Activated CD4-positive, alpha-beta memory T cell treated with anti-CD3 and anti-CD28 coated beads for 36 hours (primary cell): ENCODE measurements at regions of chr11 and their contacts with region 1.

Region 1: GRCh38 chr11:66842896-66843775 is at the start of gene RCE1:
- DNase-seq: peak; percentile 94
- H3K4me3 Mint-ChIP-seq: peak within 1 kb of the TSS; percentile 97
- H3K27ac Mint-ChIP-seq: peak within 1 kb of the TSS; percentile 93
- H3K4me1 Mint-ChIP-seq: peaks cover 49% of the 10 kb centered on the region
- H3K27me3 Mint-ChIP-seq: no peaks in the 10 kb centered on the region
- total RNA-seq, gene RCE1: 22.5 to 24.4 TPM

Region 2: DNA sequence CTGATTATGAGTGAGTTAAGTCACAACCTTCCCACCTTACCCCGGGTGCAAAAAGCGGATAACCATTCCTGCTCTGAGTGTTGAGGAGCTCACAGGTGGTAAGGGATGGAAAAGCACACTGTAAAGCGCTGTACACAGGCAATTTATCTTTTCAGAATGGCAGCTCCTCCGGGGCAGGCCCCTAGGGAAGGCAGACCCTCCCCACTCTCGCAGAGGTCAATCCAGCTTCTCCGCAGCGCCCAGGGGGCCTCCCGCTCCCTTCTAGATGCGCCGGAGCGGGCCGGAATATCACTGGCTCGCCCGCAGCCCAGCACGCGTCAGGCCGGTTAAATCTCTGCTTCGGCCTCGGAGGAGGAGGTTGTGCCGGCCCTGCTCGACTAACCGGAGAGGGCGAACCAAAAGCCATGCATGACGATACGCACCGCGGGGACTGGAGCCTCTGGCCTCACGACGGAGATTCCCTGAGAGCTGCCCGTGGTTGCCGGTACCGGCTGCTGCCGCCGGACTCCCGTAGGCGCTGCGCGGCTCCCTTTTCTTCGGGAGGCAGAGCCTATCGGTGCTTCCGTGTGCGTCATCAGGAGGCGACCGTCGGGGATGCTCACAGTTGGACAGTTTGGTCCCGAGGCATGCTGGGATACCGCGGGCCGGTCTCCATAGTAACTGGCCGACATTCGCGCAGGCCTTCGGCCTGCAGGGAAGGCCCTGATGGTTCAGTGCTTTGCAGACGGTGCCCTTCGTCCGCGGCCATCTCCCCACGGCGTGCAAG is 498.4 kb before region 1 on chr11 and contains the start of gene BRMS1:
- CTCF ChIA-PET with region 1: no interaction called
- POLR2A ChIA-PET with region 1: no interaction called
- intact Hi-C with region 1: loop called (anchors 1 kb)
- DNase-seq: peak; percentile 98
- H3K4me3 Mint-ChIP-seq: peak within 1 kb of the TSS; percentile 94
- H3K27ac Mint-ChIP-seq: peak within 1 kb of the TSS; percentile 85
- H3K4me1 Mint-ChIP-seq: peaks cover 50% of the 10 kb centered on the region
- H3K27me3 Mint-ChIP-seq: peaks cover 3% of the 10 kb centered on the region
- total RNA-seq, gene BRMS1: 29.3 to 31.2 TPM

Region 3: DNA sequence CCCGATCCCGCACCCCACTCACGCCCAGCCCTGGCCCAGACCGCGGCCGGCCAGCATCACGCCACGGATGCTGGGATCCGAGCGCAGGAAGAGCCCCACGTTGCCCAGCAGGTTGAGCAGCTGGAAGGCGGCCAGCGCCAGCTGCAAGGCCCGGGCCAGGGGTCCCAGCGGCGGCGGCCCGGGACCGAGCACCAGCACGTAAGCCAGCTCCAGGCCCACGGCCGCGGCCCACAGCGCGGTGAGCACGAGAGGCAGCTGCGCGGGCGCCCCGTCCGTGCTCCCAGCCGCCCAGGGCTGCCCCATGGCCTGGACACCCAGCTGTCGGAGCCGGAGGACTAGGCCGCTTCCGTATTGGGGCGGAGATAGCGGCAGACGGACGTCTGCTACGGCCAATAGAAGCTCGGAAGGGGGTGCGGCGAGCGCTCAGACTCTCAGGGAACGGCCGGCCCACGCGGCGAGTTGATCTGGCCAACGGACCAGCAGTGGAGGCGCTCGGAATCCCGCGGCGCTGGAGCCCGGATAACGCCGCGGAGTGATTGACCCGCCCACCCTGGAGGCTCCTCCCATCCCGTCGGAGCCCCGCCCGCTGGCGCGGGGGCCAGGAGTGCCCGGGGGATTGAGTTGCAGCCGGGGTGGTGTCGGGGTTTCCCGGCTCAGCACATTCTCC is 297.3 kb before region 1 on chr11 and contains the start of gene ZDHHC24:
- CTCF ChIA-PET with region 1: no interaction called
- POLR2A ChIA-PET with region 1: no interaction called
- intact Hi-C with region 1: loop called (anchors 5 kb)
- DNase-seq: peak; percentile 96
- H3K4me3 Mint-ChIP-seq: peak within 1 kb of the TSS; percentile 80
- H3K27ac Mint-ChIP-seq: peak within 1 kb of the TSS; percentile 74
- H3K4me1 Mint-ChIP-seq: peaks cover 14% of the 10 kb centered on the region
- H3K27me3 Mint-ChIP-seq: no peaks in the 10 kb centered on the region
- total RNA-seq, gene ZDHHC24: 13.5 to 14.9 TPM

Region 4: DNA sequence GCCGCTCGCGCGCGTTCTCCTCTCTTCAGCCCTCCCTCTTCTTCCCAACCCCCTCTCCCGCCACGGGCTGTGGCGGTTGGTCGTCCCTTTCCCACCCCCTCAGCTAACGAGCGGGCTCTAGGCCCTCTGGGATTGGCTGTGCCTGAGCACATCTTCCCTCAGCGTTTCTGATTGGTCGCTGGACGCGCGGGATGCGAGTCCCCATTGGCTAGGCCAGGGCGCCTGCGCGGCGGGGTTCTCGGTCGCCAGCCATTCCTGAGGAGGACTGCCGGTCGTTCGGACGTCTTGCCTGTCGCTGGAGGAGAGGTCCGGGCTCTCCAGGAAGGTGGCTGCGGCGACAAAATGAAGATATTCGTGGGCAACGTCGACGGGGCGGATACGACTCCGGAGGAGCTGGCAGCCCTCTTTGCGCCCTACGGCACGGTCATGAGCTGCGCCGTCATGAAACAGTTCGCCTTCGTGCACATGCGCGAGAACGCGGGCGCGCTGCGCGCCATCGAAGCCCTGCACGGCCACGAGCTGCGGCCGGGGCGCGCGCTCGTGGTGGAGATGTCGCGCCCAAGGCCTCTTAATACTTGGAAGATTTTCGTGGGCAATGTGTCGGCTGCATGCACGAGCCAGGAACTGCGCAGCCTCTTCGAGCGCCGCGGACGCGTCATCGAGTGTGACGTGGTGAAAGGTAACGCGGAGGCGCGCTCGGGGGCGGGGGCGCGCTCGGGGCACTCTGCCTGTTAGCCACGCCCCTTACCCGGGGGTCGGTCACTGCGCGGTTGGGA is 226.6 kb before region 1 on chr11 and contains the start of gene RBM14:
- CTCF ChIA-PET with region 1: no interaction called
- POLR2A ChIA-PET with region 1: interaction called, 8 read pairs
- intact Hi-C with region 1: loop called (anchors 5 kb)
- DNase-seq: peak; percentile 99
- H3K4me3 Mint-ChIP-seq: peak within 1 kb of the TSS; percentile 91
- H3K27ac Mint-ChIP-seq: peak within 1 kb of the TSS; percentile 94
- H3K4me1 Mint-ChIP-seq: peaks cover 36% of the 10 kb centered on the region
- H3K27me3 Mint-ChIP-seq: no peaks in the 10 kb centered on the region
- total RNA-seq, gene RBM14: 114 to 121 TPM

Region 5: DNA sequence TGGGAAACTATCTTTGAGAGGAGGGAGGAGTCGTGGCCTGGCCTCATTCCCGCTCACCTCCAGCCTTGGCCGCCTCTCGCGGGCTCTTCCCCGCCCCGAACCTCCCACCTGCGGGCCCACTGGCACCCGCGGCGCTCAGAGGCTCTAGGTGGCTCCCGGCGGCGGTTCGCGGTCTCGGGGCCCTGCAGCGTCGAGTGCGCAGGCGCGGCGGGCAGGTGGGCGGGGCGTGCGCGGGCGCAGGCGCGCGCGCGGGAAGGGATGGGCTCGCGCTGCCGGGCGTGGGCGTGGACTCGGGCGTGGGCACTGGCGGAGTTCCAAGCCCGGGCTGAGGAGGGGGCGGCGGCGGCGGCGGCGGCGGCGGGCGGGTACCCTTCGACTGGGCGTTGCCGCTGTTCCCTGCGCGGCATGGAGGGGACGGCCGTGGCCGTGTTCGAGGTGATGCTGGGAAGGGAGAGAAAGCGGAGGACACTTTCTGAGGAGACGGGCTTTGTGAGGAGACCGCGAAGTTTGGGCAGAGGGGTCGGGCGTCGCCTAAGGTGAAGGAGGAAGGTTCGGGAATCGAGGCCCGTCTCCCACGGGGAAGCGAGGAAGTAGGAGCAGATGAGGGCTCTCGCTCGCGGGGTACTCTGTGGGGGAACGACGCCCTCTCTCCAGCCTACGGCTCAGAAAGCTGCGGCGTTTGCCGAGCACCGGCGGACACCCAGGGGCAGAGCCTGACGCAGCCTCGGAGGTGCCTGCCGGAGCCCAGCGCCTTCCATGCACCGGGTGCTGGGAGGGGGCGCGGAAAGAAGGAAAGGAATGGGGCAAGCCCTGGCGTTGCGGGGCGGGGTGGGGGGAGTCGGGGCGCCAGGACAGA is 98.4 kb before region 1 on chr11:
- CTCF ChIA-PET with region 1: no interaction called
- POLR2A ChIA-PET with region 1: interaction called, 3 read pairs
- intact Hi-C with region 1: loop called (anchors 1 kb)
- DNase-seq: peak; percentile 92
- H3K4me3 Mint-ChIP-seq: peak overlapping the region; percentile 92
- H3K27ac Mint-ChIP-seq: peak overlapping the region; percentile 78
- H3K4me1 Mint-ChIP-seq: peaks cover 9% of the 10 kb centered on the region
- H3K27me3 Mint-ChIP-seq: no peaks in the 10 kb centered on the region

Region 6: DNA sequence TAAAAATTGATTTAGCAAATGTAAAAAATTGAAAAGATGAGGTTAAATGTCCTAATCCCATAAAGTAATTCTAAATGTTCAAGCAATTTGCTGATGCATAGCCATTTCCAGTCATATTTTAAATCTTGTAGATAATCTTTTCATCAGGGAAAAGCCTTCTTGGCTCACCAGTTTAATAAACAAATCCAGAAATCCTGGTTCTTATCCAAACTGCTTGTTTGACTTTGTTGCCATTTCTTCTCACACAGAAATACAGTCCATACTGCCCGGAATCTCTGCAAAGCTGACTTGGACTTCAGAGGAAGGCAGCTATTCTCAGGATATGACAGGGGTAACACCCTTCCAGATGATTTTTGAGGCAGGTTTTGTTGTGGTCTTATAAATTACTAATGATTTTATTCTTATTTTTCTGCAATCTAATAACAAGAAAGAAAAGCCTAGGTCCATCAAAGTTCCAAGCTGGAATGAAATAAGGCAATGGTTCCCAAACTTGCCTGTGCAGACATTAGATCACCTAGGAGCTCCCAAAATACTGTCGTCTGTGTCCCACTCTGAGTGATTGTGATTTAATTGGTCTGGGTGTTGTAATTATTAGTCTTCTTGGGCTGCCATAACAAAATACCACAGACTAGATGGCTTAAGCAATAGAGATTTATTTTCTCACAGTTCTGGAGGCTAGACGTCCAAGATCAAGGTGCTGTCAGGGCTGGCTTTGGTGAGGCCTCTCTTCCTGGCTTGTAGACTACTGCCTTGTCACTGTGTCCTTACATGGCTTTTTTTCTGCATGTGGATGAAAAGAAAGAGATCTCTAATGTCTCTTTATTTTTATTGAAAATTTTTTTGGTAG is 55.0 kb before region 1 on chr11:
- CTCF ChIA-PET with region 1: no interaction called
- POLR2A ChIA-PET with region 1: no interaction called
- intact Hi-C with region 1: no loop called
- DNase-seq: no peak
- H3K4me3 Mint-ChIP-seq: no peak overlapping the region
- H3K27ac Mint-ChIP-seq: no peak overlapping the region
- H3K4me1 Mint-ChIP-seq: no peaks in the 10 kb centered on the region
- H3K27me3 Mint-ChIP-seq: no peaks in the 10 kb centered on the region

Region 7: DNA sequence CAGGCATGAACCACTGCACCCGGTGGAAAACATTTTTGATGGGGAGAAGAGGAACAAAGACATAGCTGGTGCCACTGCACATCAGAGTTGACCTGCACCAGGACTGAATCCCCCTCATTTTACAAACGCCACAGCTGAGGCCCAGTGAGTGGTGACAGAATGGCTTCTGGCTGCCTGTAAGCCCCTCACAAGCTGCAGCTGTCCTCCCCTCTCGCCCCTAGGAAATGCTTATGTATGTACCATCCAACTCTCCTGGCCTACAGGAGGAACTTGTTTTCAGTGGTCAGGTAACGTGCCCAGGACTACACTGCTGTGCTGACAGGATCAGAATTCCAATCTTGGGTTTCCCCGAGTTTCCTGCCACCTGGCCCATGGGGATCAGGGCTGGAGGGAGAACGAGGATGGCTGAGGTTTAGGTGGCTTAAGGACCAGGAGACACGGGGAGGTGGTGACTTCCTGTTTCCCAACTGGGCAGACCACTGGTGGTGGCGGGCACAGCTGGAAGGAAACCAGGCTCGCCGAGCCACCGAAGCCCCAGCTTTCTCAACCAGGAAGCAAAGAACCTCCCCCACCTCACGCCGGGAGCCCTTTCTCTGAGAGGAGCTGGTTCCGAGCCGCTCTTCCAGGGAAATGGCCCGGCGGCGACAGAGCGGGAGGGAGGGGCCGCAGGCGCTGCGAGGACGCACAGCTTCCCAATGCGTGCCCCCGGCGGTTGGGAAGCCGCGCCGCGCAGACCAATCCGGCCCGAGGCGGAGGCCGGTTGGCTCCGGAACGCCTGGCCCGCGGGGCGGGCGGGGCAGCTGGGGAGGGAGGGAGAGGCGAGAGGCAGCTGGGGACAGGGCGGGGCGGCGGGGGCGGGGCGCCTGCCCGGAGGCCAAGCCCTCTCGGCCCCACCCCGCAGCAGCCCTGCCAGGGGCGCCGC is 12.7 kb after region 1 on chr11:
- CTCF ChIA-PET with region 1: interaction called, 11 read pairs
- POLR2A ChIA-PET with region 1: interaction called, 59 read pairs
- intact Hi-C with region 1: loop called (anchors 1 kb)
- DNase-seq: peak; percentile 93
- H3K4me3 Mint-ChIP-seq: peak overlapping the region; percentile 88
- H3K27ac Mint-ChIP-seq: peak overlapping the region; percentile 75
- H3K4me1 Mint-ChIP-seq: peaks cover 12% of the 10 kb centered on the region
- H3K27me3 Mint-ChIP-seq: no peaks in the 10 kb centered on the region

Region 8: DNA sequence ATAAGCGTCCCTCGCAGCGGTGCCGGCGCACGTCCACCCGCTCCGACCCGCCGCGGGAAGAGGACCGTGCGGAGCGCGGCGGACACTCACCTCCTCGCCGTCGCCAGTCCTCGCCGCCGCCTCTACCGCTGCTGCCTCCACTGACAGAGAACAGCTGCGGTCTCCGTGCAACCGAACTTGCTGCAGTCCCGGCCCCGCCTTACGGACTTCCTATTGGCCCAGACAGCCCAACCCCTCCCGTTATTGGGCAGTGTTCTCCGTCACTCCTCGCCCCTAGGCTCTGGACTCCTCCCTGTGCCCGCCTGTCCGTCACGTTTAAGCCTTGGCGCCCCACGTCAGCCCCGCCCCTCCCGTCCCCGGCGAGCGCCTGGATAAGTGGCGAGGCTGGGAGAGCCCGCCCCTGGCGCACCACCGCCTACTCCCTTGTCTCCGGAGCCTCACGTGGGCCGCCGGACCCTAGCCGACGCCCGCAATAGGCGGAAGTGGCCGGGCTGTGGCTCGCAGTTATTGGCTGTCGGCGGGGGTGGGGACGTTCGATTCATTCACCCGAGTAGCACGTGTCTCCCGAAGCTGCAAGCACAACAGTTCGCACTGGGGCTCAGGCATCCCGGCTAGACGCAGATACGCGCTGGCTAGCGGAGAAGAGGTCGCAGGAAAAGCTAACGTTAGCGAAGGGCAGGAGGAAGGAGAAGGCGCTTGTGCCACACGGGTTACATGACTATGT is 115.3 kb after region 1 on chr11 and contains the start of gene PC:
- CTCF ChIA-PET with region 1: no interaction called
- POLR2A ChIA-PET with region 1: interaction called, 4 read pairs
- intact Hi-C with region 1: loop called (anchors 2 kb)
- DNase-seq: peak; percentile 99
- H3K4me3 Mint-ChIP-seq: peak within 1 kb of the TSS; percentile 76
- H3K27ac Mint-ChIP-seq: peak within 1 kb of the TSS; percentile 71
- H3K4me1 Mint-ChIP-seq: peaks cover 18% of the 10 kb centered on the region
- H3K27me3 Mint-ChIP-seq: no peaks in the 10 kb centered on the region
- total RNA-seq, gene PC: 13.1 to 15.3 TPM